Heart right ventricle (tissue), 16 donors: ENCODE measurements at regions of chr18 and their contacts with region 1.

Region 1: DNA sequence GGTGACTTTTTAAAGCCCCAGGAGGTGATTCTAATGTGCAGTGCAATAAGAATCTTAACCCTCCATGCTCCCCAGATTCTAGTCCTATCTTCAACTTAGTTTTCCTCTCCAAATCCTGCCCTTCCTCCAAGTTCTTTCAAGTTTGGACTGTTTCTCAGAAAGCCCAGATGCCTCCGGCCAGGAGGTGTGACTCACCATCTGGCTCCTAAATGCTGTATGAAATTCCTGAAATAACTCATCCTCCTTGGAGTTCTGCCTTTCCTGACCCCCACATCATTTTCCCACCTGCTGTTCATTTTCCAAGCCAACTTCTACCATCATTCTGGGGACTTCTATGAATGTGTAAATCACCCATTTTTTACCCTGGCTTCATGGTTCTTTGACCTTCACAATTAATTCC is 118.2 kb upstream of the NOL4 start:
- DNase-seq: no peak
- ATAC-seq: no peak
- H3K4me3 ChIP-seq: no peak overlapping the region
- H3K27ac ChIP-seq: no peak overlapping the region
- H3K4me1 ChIP-seq: no peaks in the 10 kb centered on the region
- H3K27me3 ChIP-seq: no peaks in the 10 kb centered on the region
- CTCF ChIP-seq: no peak

Region 2: GRCh38 chr18:34207344-34207851 is 135.6 kb before region 1 on chr18:
- intact Hi-C with region 1: no loop called
- DNase-seq: no peak
- ATAC-seq: no peak
- H3K4me3 ChIP-seq: no peak overlapping the region
- H3K27ac ChIP-seq: no peak overlapping the region
- H3K4me1 ChIP-seq: no peaks in the 10 kb centered on the region
- H3K27me3 ChIP-seq: no peaks in the 10 kb centered on the region
- CTCF ChIP-seq: no peak

Region 3: DNA sequence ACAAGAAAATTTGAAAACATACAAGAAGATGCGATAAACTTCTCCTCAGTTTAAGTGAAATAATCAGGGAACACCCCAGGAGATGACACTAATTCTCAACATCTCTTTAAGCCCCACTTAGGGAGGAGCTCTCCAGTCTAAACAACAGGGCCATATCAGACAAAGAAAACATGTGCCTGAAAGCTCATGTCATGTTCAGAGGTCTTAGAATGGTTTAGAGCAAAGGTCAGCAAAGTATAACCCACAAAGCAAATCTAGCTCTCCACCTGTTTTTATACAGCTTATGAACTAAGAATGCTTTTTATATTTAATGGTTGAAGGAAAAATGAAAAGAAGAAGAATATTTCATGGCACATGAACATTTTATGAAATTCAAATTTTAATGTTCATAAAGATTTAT is 37.4 kb after region 1 on chr18:
- intact Hi-C with region 1: no loop called
- DNase-seq: no peak
- ATAC-seq: no peak
- H3K4me3 ChIP-seq: no peak overlapping the region
- H3K27ac ChIP-seq: no peak overlapping the region
- H3K4me1 ChIP-seq: no peaks in the 10 kb centered on the region
- H3K27me3 ChIP-seq: no peaks in the 10 kb centered on the region
- CTCF ChIP-seq: no peak

Region 4: GRCh38 chr18:34399892-34400291 is 56.9 kb after region 1 on chr18:
- intact Hi-C with region 1: loop called in 1 of 10 experiments (anchors 10 kb)
- DNase-seq: no peak
- ATAC-seq: peak in 1 of 8 donors; percentile 75
- H3K4me3 ChIP-seq: no peak overlapping the region
- H3K27ac ChIP-seq: peak overlapping the region in 1 of 10 donors; percentile 16
- H3K4me1 ChIP-seq: peaks cover 0 to 8% (median 0%) of the 10 kb centered on the region in 9 donors
- H3K27me3 ChIP-seq: no peaks in the 10 kb centered on the region
- CTCF ChIP-seq: no peak

Region 5: DNA sequence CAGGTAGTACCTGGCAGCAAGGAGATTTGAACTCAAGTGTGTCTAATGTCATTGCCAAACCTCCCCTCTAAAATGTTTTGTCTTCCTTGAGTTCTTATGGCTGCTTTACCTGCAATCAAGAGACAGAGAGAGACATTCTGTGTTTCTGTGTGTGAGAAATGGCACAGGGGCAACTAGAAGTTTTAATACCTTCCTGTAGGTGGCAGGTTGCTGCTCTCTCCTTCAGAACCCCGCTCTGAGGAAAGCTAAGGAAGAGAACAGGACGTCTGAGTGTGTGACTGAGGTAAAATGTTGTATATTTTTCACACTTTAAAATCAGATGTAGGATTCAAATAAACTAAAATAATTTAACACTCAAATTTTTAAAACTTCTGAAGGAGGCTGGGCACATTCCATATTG is 386.3 kb after region 1 on chr18:
- intact Hi-C with region 1: no loop called
- DNase-seq: no peak
- ATAC-seq: peak in 5 of 8 donors; percentile 62 to 74 (median 66)
- H3K4me3 ChIP-seq: no peak overlapping the region
- H3K27ac ChIP-seq: peak overlapping the region in 9 of 10 donors; percentile 43 to 69 (median 64)
- H3K4me1 ChIP-seq: peaks cover 5 to 39% (median 14%) of the 10 kb centered on the region in 9 donors
- H3K27me3 ChIP-seq: no peaks in the 10 kb centered on the region
- CTCF ChIP-seq: peak in 8 of 9 donors; percentile 16 to 53 (median 41)